ENCODE measurements at regions of chr15 and their contacts with region 1.

Region 1: DNA sequence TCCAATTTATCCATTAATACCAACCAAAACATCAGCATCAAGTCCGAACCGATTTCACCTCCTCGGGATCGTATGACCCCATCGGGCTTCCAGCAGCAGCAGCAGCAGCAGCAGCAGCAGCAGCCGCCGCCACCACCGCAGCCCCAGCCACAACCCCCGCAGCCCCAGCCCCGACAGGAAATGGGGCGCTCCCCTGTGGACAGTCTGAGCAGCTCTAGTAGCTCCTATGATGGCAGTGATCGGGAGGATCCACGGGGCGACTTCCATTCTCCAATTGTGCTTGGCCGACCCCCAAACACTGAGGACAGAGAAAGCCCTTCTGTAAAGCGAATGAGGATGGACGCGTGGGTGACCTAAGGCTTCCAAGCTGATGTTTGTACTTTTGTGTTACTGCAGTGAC is 20.8 kb downstream of the LYSMD4 start:
- DNase-seq: no peak
- ATAC-seq: no peak
- H3K4me3 ChIP-seq: no peak overlapping the region
- H3K4me3 Mint-ChIP-seq: no peak overlapping the region
- H3K27ac ChIP-seq: no peak overlapping the region
- H3K27ac Mint-ChIP-seq: peak overlapping the region; percentile 27
- H3K4me1 ChIP-seq: peaks cover 17% of the 10 kb centered on the region
- H3K4me1 Mint-ChIP-seq: peaks cover 21% of the 10 kb centered on the region
- H3K27me3 ChIP-seq: no peaks in the 10 kb centered on the region
- H3K27me3 Mint-ChIP-seq: no peaks in the 10 kb centered on the region
- CTCF ChIP-seq: no peak

Region 2: DNA sequence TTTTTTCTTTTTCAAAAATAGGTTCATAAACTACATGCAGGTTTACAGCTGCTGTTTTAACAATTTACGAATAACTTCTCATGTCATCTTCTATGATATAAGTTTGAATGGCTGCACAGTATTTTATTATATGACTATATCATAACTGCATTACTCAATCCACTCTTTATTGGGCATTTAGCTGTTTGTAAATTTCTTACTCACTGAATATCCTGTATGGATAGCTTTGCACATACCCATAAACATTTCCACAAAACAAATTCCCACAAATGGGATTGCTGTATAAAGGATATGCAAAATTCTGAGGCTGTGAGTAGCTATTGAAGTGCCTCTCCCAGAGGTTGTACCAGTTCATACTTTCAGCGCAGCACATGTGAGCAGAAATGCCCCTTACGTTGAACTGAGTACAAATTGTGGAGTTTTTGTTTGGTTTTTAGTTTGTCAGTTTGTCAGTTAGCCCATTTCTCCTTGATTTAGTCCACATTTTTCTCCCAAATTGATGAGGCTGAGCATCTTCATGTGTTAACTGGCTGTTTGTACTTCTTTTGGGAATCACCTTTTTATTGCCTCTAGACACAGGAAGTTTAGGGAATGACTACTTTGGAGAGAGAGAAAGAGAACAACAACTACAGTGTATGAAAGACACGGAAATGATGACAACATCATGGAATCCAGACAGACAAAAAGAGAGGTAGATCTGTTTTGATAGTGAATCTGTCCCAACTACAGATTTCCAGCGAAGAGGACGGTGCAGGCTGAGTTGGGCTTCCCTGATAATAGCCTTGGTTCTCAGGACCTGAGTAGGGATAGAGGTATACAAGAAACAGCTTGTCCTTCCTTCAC is 487.8 kb before region 1 on chr15:
- CTCF ChIA-PET with region 1: no interaction called
- POLR2A ChIA-PET with region 1: no interaction called
- intact Hi-C with region 1: no loop called
- DNase-seq: no peak
- ATAC-seq: no peak
- H3K4me3 ChIP-seq: no peak overlapping the region
- H3K4me3 Mint-ChIP-seq: no peak overlapping the region
- H3K27ac ChIP-seq: no peak overlapping the region
- H3K27ac Mint-ChIP-seq: no peak overlapping the region
- H3K4me1 ChIP-seq: no peaks in the 10 kb centered on the region
- H3K4me1 Mint-ChIP-seq: no peaks in the 10 kb centered on the region
- H3K27me3 ChIP-seq: no peaks in the 10 kb centered on the region
- H3K27me3 Mint-ChIP-seq: peaks cover 7% of the 10 kb centered on the region
- CTCF ChIP-seq: no peak

Region 3: GRCh38 chr15:99727733-99728132 is 15.3 kb after region 1 on chr15:
- CTCF ChIA-PET with region 1: interaction called, 6 read pairs
- POLR2A ChIA-PET with region 1: interaction called, 4 read pairs
- intact Hi-C with region 1: loop called in 1 of 2 experiments (anchors 2 kb)
- DNase-seq: no peak
- ATAC-seq: no peak
- H3K4me3 ChIP-seq: no peak overlapping the region
- H3K4me3 Mint-ChIP-seq: no peak overlapping the region
- H3K27ac ChIP-seq: no peak overlapping the region
- H3K27ac Mint-ChIP-seq: no peak overlapping the region
- H3K4me1 ChIP-seq: peaks cover 10% of the 10 kb centered on the region
- H3K4me1 Mint-ChIP-seq: peaks cover 9% of the 10 kb centered on the region
- H3K27me3 ChIP-seq: no peaks in the 10 kb centered on the region
- H3K27me3 Mint-ChIP-seq: no peaks in the 10 kb centered on the region
- CTCF ChIP-seq: no peak